PC-9 (cell line): ENCODE measurements at regions of chr2 and their contacts with region 1.

Region 1: GRCh38 chr2:70964596-70965386 is 13.6 kb upstream of the ANKRD53 start:
- DNase-seq: peak in 1 of 2 experiments; percentile 33
- H3K4me3 ChIP-seq: no peak overlapping the region
- H3K27ac ChIP-seq: no peak overlapping the region
- H3K4me1 ChIP-seq: no peaks in the 10 kb centered on the region
- H3K27me3 ChIP-seq: no peaks in the 10 kb centered on the region
- CTCF ChIP-seq: no peak

Region 2: DNA sequence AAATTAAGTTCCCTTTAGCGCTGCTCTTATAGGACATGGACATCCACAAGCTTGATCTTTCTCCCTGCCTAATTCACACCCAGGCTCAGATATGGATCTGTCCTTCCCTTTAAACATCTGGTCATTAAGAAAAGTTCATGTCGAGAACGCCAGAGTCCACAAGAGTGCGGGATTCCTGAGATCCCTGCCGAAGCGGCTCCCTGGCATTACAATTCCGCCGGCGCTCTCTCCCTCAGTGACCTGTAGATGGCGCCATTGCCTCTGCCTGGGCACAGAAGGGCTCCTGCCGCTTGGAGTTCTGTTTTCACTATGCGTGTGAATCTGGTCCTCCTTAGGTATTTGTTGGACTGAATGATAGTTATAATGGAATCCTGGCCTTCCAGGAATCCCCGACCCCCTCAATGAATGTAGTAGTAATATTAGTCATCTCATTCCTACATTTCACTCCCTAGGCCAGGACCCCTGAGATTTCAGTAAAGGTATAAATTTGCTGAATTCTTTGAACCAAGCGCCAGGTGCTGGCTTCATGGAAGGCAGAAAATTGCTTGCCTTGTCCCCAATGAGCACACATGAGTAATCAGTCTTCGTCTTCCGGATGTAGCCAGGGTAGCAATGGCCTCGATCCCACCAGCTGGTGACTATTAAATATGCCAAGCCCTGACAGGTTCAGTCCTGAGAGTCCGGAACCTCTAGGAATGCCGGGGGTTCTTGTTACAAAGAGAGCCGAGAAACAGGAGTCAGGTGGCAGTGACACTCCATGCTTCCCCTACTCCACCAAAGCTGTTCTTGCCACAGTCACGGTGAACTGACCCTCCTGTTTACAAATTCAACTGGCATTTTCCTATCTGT is 102.8 kb before region 1 on chr2:
- CTCF ChIA-PET with region 1: no interaction called
- POLR2A ChIA-PET with region 1: no interaction called
- intact Hi-C with region 1: no loop called
- DNase-seq: peak; percentile 59 to 86
- H3K4me3 ChIP-seq: no peak overlapping the region
- H3K27ac ChIP-seq: no peak overlapping the region
- H3K4me1 ChIP-seq: no peaks in the 10 kb centered on the region
- H3K27me3 ChIP-seq: peaks cover 30% of the 10 kb centered on the region
- CTCF ChIP-seq: peak; percentile 93

Region 3: GRCh38 chr2:70994756-70995729 is 30.3 kb after region 1 on chr2 and contains the start of gene TEX261:
- CTCF ChIA-PET with region 1: no interaction called
- POLR2A ChIA-PET with region 1: no interaction called
- intact Hi-C with region 1: loop called (anchors 1 kb)
- DNase-seq: peak; percentile 71 to 93
- H3K4me3 ChIP-seq: peak within 1 kb of the TSS; percentile 80
- H3K27ac ChIP-seq: no peak within 1 kb of the TSS
- H3K4me1 ChIP-seq: peaks cover 20% of the 10 kb centered on the region
- H3K27me3 ChIP-seq: no peaks in the 10 kb centered on the region
- CTCF ChIP-seq: peak; percentile 56
- total RNA-seq, gene TEX261: 30.3 and 47.6 TPM in 2 replicates

Region 4: GRCh38 chr2:71647356-71647755 is 682.6 kb after region 1 on chr2:
- CTCF ChIA-PET with region 1: no interaction called
- POLR2A ChIA-PET with region 1: no interaction called
- intact Hi-C with region 1: no loop called
- DNase-seq: no peak
- H3K4me3 ChIP-seq: no peak overlapping the region
- H3K27ac ChIP-seq: no peak overlapping the region
- H3K4me1 ChIP-seq: peaks cover 34% of the 10 kb centered on the region
- H3K27me3 ChIP-seq: no peaks in the 10 kb centered on the region
- CTCF ChIP-seq: no peak